Activated naive CD8-positive, alpha-beta T cell treated with anti-CD3 and anti-CD28 coated beads, Interleukin-2, amount 10 ng/mL, durations not matched to agents 7 days and 5 days (primary cell): ENCODE measurements at regions of chr17 and their contacts with region 1.

Region 1: GRCh38 chr17:59106463-59107305 is at the start of gene TRIM37:
- DNase-seq: peak; percentile 99
- ATAC-seq: peak; percentile 97
- H3K4me3 Mint-ChIP-seq: peak within 1 kb of the TSS; percentile 85
- H3K27ac Mint-ChIP-seq: peak within 1 kb of the TSS; percentile 93
- H3K4me1 Mint-ChIP-seq: peaks cover 33% of the 10 kb centered on the region
- H3K27me3 Mint-ChIP-seq: no peaks in the 10 kb centered on the region
- total RNA-seq, gene TRIM37: 25.1 to 25.5 TPM

Region 2: DNA sequence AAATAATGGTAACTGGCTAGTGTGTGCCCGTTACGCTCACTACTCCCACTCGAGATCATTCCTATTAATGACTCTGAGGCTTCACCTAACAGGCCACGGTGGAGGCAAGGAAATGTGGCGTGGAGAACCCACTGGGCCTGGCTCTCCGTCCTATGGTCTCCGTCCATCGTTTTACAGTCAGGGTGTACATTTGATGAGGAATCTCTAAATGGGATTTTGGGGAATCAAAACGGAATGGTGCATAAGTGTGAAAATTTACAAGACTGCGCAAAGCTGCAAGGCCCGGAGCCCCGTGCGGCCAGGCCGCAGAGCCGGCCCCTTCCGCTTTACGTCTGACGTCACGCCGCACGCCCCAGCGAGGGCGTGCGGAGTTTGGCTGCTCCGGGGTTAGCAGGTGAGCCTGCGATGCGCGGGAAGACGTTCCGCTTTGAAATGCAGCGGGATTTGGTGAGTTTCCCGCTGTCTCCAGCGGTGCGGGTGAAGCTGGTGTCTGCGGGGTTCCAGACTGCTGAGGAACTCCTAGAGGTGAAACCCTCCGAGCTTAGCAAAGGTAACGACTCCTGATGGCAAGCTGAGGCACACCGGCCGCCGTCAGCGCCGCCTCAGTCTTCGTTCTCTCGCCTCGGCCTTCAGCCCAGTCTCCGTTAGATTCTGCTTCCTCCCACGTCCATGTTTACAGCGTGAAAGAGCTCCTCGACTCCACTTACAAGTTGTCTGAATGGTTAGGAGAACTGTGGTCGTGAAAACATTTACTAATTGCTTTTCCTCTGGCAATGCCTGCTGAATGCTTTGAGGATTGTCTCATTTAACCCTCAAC is 414.2 kb before region 1 on chr17 and contains the start of gene RAD51C:
- POLR2A ChIA-PET with region 1: interaction called, 10 read pairs
- DNase-seq: peak; percentile 90
- ATAC-seq: peak; percentile 98
- H3K4me3 Mint-ChIP-seq: peak within 1 kb of the TSS; percentile 95
- H3K27ac Mint-ChIP-seq: peak within 1 kb of the TSS; percentile 96
- H3K4me1 Mint-ChIP-seq: peaks cover 24% of the 10 kb centered on the region
- H3K27me3 Mint-ChIP-seq: peaks cover 4% of the 10 kb centered on the region
- total RNA-seq, gene RAD51C: 40.0 to 45.7 TPM

Region 3: DNA sequence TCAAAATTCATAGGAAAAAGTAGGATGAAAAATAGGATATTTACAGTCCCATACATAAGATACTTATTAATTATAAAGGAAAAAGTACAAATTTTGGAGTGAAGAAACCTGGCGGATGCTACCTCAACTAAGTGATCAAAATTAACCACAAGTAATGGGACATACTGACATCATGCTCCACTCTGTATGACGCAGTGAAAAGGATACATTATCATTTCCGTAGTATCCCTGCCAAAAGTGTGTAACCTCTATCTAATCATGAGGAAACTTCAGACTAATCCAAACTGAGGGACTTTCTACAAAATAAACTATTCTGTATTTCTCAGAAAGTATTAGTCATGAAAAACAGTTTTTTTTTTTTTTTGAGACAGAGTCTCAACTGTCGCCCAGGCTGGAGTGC is 60.5 kb before region 1 on chr17:
- POLR2A ChIA-PET with region 1: no interaction called
- DNase-seq: no peak
- ATAC-seq: no peak
- H3K4me3 Mint-ChIP-seq: no peak overlapping the region
- H3K27ac Mint-ChIP-seq: no peak overlapping the region
- H3K4me1 Mint-ChIP-seq: no peaks in the 10 kb centered on the region
- H3K27me3 Mint-ChIP-seq: no peaks in the 10 kb centered on the region

Region 4: DNA sequence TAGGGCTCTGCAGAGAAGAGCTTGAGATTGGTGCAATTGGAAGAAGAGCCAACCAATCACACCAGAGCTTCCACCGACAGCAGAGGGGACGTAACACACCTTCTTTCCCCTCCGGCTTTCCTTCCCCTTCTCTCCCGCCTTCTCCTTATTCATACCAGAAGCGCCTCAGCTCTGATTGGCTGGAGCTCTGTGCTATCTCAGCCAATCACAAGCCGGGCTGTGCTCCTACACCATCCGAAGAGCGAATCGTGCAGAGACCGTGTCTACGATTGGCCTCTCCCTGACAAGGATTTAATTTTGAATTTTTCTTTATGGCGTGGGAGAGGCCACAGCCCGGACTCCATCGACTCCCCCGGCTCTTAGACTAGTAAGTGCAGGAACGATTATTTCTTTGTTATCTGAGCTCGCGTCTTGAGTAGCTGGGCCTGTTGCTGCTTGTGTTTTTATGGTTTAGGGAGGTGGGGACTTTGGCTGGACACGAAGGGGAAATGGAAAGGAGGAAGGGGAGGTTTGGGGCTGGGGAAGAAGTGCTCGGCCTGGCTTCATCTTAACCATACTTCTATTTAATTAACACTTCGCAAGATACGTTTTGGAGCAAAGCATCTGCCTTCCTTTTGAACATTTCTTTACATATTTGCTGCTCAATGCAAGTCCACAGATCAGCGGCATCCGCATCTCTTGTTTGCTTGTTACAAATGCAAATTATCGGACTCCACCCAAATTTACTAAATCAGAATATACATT is 48.9 kb after region 1 on chr17 and contains the start of gene PRR11:
- POLR2A ChIA-PET with region 1: interaction called, 23 read pairs
- DNase-seq: peak; percentile 79
- ATAC-seq: peak; percentile 89
- H3K4me3 Mint-ChIP-seq: no peak within 1 kb of the TSS
- H3K27ac Mint-ChIP-seq: no peak within 1 kb of the TSS
- H3K4me1 Mint-ChIP-seq: peaks cover 47% of the 10 kb centered on the region
- H3K27me3 Mint-ChIP-seq: no peaks in the 10 kb centered on the region
- total RNA-seq, gene PRR11: 54.0 to 58.1 TPM

Region 5: DNA sequence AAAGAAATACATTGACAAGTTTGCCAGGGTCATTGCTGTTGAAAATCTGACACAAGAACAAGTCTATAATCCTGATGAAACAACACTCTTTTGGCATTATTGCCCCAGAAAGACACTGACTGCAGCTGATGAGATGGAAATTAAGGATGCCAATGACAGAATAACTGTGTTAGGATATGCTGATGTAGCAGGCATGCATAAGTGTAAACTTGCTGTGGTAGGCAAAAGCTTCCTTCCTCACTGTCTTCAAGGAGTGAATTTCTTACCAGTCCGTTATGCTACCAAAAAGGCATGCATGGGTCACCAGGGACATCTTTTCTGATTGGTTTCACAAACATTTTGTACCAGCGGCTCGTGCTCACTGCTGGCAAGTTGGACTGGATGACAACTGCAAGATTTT is 124.1 kb after region 1 on chr17:
- POLR2A ChIA-PET with region 1: no interaction called
- DNase-seq: no peak
- ATAC-seq: no peak
- H3K4me3 Mint-ChIP-seq: no peak overlapping the region
- H3K27ac Mint-ChIP-seq: no peak overlapping the region
- H3K4me1 Mint-ChIP-seq: peaks cover 2% of the 10 kb centered on the region
- H3K27me3 Mint-ChIP-seq: no peaks in the 10 kb centered on the region